ENCODE measurements at regions of chr5 and their contacts with region 1.

Region 1: DNA sequence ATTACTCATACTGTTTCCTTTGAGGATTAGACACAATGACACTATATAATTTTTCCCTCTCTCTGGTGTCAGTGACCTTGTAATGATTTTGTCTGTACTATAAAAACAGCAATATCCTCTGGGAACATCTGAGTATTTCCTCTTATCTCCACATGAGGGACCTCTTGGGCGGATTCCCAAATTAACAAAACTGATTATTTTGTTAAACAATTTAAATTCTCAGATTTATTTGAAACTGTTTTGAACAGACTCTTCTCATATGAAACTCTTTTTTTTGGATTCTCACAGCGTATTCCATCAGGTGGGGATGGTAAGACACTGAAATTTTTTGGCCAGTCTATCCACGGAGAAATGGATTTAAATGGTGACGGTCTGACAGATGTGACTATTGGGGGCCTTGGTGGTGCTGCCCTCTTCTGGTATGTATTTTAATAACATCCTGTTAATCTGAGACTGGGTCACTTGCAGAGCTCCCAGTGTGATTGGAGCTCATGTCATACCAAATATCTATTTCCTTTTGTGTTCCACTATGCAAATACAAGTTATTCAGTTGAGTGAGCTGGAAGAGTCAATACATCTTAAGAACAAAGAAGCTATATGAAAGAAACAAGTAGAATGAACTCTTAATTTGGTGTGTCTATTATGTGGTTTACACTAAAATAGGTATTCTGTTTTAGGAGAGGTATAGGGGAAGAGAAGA is 73.8 kb upstream of the ITGA2 start:
- DNase-seq: peak; percentile 88
- H3K27ac ChIP-seq: no peak overlapping the region
- CTCF ChIP-seq: peak; percentile 97

Region 2: DNA sequence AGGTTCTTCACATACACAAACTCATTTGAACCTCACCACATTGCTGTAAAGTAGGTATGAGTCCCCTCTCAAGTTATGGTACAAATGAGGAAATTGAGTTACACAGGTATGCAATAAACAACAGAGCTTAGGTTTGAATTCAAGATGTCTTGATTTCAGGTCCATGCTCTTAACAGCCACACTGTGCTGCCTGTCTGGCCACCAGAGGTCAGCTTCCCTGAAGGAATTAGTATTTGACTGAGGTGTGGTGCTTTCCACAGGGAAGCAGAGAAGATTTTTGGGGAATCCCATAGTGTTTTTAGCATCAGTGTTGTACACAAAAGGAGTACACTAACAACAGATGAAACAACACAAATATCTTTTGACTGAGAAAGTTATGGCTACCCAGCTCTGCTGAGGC is 222.0 kb before region 1 on chr5:
- CTCF ChIA-PET with region 1: interaction called, 13 read pairs
- POLR2A ChIA-PET with region 1: no interaction called
- DNase-seq: peak; percentile 49
- H3K27ac ChIP-seq: no peak overlapping the region
- CTCF ChIP-seq: peak; percentile 63

Region 3: GRCh38 chr5:52842111-52842510 is 73.2 kb before region 1 on chr5:
- CTCF ChIA-PET with region 1: interaction called, 10 read pairs
- POLR2A ChIA-PET with region 1: no interaction called
- DNase-seq: no peak
- H3K27ac ChIP-seq: no peak overlapping the region
- CTCF ChIP-seq: no peak

Measured in RWPE1 (cell line).